Activated CD8-positive, alpha-beta T cell treated with anti-CD3 and anti-CD28 coated beads, Interleukin-2, amount 10 ng/mL, durations not matched to agents 7 days and 5 days (primary cell): ENCODE measurements at regions of chr11 and their contacts with region 1.

Region 1: DNA sequence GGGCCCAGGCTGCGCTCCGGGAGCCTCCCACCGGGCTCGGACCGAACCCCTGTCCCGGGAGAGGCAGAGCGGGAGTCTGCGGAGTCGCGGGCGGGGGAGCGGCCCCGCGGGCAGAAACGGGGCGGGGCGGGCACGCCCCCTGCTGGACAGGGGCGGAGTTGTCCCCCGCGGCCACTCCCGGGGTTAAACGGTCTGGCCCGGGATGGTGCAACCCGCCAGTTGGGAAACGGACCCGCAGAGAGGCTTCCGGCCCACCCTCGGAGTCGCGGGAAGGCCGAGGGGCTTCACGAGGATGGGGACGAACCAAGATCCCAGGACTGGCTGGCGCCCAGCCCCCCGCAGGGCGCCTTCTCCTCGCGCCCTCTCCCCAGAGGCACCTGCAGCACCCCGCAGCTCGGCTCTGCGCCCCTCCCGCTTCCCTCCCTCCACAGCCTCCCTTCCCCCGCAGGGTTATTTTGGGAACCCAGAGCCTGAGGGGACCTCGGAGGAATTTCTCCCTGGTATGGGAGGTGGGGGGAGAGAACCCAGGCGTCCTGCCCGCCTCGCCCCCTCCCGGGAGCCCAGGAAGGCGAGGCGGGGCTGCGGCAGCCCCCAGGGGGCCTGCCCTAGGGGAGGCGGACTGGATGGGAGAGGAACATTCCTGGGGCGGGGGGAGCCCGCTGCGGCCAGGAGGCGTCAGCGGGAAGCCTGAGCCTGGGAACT is 902 bp downstream of the RASGRP2 start:
- DNase-seq: peak; percentile 78
- ATAC-seq: peak; percentile 24
- H3K4me3 Mint-ChIP-seq: peak overlapping the region; percentile 84
- H3K27ac Mint-ChIP-seq: no peak overlapping the region
- H3K4me1 Mint-ChIP-seq: peaks cover 42% of the 10 kb centered on the region
- H3K27me3 Mint-ChIP-seq: no peaks in the 10 kb centered on the region

Region 2: DNA sequence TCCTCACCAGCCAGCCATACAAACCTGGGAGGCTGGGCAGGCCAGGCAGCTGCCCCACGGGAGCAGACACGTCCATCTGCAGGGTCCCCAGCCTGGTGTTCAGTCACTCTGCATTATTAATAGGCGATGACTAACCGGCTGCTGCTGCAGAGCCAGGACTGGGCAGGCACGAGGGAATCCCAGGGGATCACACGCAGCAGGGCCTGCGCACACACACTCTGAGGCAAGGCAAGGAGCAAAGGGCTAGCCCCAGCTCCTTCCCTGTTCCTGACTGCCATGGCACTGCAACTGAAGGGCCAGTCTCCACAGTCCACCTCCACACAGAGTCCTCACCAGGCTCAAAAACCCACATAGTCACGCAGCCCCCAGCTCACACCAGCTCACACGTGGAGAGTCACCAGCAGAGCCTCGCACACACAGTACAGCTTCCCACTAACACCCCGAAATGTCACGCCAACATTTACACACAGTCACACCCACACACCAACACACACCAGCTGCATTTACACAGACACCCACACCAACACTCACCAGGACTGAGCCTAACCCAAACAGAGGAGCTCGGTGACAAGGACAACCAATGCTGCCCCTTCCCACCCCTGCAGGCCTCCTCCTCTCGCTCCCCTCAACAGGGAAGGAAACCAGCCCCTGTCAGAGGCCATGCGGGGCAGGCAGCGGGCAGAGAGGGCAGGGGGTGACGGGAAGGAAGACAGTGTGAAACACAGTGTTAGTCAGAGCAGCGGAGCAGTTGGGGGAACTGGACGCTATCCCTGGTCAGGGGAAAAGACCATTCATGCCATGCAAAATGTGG is 67.4 kb before region 1 on chr11:
- CTCF ChIA-PET with region 1: no interaction called
- POLR2A ChIA-PET with region 1: no interaction called
- DNase-seq: no peak
- ATAC-seq: no peak
- H3K4me3 Mint-ChIP-seq: no peak overlapping the region
- H3K27ac Mint-ChIP-seq: no peak overlapping the region
- H3K4me1 Mint-ChIP-seq: no peaks in the 10 kb centered on the region
- H3K27me3 Mint-ChIP-seq: peaks cover 45% of the 10 kb centered on the region

Region 3: GRCh38 chr11:64718084-64718779 is 24.8 kb before region 1 on chr11:
- CTCF ChIA-PET with region 1: interaction called, 11 read pairs
- POLR2A ChIA-PET with region 1: no interaction called
- DNase-seq: no peak
- ATAC-seq: no peak
- H3K4me3 Mint-ChIP-seq: no peak overlapping the region
- H3K27ac Mint-ChIP-seq: no peak overlapping the region
- H3K4me1 Mint-ChIP-seq: no peaks in the 10 kb centered on the region
- H3K27me3 Mint-ChIP-seq: peaks cover 67% of the 10 kb centered on the region

Region 4: GRCh38 chr11:64759561-64760349 is 16.7 kb after region 1 on chr11 and contains the start of gene PYGM:
- CTCF ChIA-PET with region 1: interaction called, 149 read pairs
- POLR2A ChIA-PET with region 1: interaction called, 102 read pairs
- DNase-seq: no peak
- ATAC-seq: no peak
- H3K4me3 Mint-ChIP-seq: peak within 1 kb of the TSS; percentile 63
- H3K27ac Mint-ChIP-seq: peak within 1 kb of the TSS; percentile 86
- H3K4me1 Mint-ChIP-seq: peaks cover 55% of the 10 kb centered on the region
- H3K27me3 Mint-ChIP-seq: no peaks in the 10 kb centered on the region
- total RNA-seq, gene PYGM: 2.9 to 4.7 TPM

Region 5: GRCh38 chr11:64767344-64768299 is 24.6 kb after region 1 on chr11:
- CTCF ChIA-PET with region 1: interaction called, 149 read pairs
- POLR2A ChIA-PET with region 1: interaction called, 102 read pairs
- DNase-seq: peak; percentile 93
- ATAC-seq: peak; percentile 35
- H3K4me3 Mint-ChIP-seq: peak overlapping the region; percentile 35
- H3K27ac Mint-ChIP-seq: peak overlapping the region; percentile 83
- H3K4me1 Mint-ChIP-seq: peaks cover 90% of the 10 kb centered on the region
- H3K27me3 Mint-ChIP-seq: no peaks in the 10 kb centered on the region

Region 6: GRCh38 chr11:64778508-64779346 is 35.7 kb after region 1 on chr11 and contains the start of gene SF1:
- CTCF ChIA-PET with region 1: interaction called, 149 read pairs
- POLR2A ChIA-PET with region 1: interaction called, 27 read pairs
- DNase-seq: peak; percentile 100
- ATAC-seq: peak; percentile 89
- H3K4me3 Mint-ChIP-seq: peak within 1 kb of the TSS; percentile 89
- H3K27ac Mint-ChIP-seq: peak within 1 kb of the TSS; percentile 99
- H3K4me1 Mint-ChIP-seq: peaks cover 57% of the 10 kb centered on the region
- H3K27me3 Mint-ChIP-seq: no peaks in the 10 kb centered on the region
- total RNA-seq, gene SF1: 421 to 423 TPM